ENCODE measurements at regions of chr11 and their contacts with region 1.

Region 1: GRCh38 chr11:60913793-60914632 is at the start of gene TMEM109:
- DNase-seq: peak; percentile 91
- H3K4me3 Mint-ChIP-seq: peak within 1 kb of the TSS; percentile 92
- H3K27ac Mint-ChIP-seq: peak within 1 kb of the TSS; percentile 94
- H3K4me1 Mint-ChIP-seq: peaks cover 44% of the 10 kb centered on the region
- H3K27me3 Mint-ChIP-seq: peaks cover 5% of the 10 kb centered on the region
- total RNA-seq, gene TMEM109: 114 to 119 TPM

Region 2: GRCh38 chr11:60899046-60899936 is 14.7 kb before region 1 on chr11:
- CTCF ChIA-PET with region 1: interaction called, 40 read pairs
- POLR2A ChIA-PET with region 1: no interaction called
- DNase-seq: peak; percentile 26
- H3K4me3 Mint-ChIP-seq: no peak overlapping the region
- H3K27ac Mint-ChIP-seq: no peak overlapping the region
- H3K4me1 Mint-ChIP-seq: peaks cover 8% of the 10 kb centered on the region
- H3K27me3 Mint-ChIP-seq: no peaks in the 10 kb centered on the region

Region 3: GRCh38 chr11:60925868-60926267 is 11.9 kb after region 1 on chr11:
- CTCF ChIA-PET with region 1: interaction called, 17 read pairs
- POLR2A ChIA-PET with region 1: no interaction called
- DNase-seq: no peak
- H3K4me3 Mint-ChIP-seq: no peak overlapping the region
- H3K27ac Mint-ChIP-seq: no peak overlapping the region
- H3K4me1 Mint-ChIP-seq: peaks cover 8% of the 10 kb centered on the region
- H3K27me3 Mint-ChIP-seq: peaks cover 38% of the 10 kb centered on the region